Common myeloid progenitor, CD34-positive (primary cell): ENCODE measurements at regions of chr14 and their contacts with region 1.

Region 1: GRCh38 chr14:101843665-101844064 is 82.2 kb downstream of the PPP2R5C start:
- DNase-seq: peak; percentile 88 to 94 (median 91)
- H3K4me3 ChIP-seq: no peak overlapping the region
- H3K27ac ChIP-seq: no peak overlapping the region
- H3K4me1 ChIP-seq: peaks cover 0 to 8% (median 4%) of the 10 kb centered on the region in 4 experiments
- H3K27me3 ChIP-seq: no peaks in the 10 kb centered on the region

Region 2: DNA sequence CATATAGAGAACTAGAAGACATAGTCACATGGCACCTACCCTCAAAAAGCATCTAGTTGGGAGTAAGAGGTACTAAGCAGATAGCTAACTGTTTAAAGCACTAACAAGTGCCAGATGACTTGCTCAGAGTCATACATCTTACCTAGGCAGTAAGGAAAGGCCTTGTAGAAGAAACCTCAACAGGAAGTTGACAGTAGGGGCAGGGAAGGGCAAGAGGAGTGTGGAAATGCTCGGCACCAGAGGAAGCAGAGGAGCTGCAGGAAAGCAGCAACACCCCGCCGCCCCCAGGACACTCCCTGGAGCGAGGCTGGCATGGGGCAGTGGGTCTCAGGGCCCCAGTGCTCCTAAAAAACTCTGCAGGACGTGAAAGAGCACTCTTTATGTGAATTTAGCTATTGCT is 10.7 kb after region 1 on chr14:
- CTCF ChIA-PET with region 1: interaction called, 20 read pairs
- POLR2A ChIA-PET with region 1: interaction called, 3 read pairs
- DNase-seq: peak in 2 of 3 donors; percentile 51 to 67
- H3K4me3 ChIP-seq: peak overlapping the region in 2 of 7 experiments; percentile 25 to 48
- H3K27ac ChIP-seq: peak overlapping the region in 1 of 2 experiments; percentile 45
- H3K4me1 ChIP-seq: peaks cover 9 to 39% (median 35%) of the 10 kb centered on the region in 4 experiments
- H3K27me3 ChIP-seq: no peaks in the 10 kb centered on the region

Region 3: GRCh38 chr14:101865288-101865687 is 21.6 kb after region 1 on chr14:
- CTCF ChIA-PET with region 1: interaction called, 32 read pairs
- POLR2A ChIA-PET with region 1: no interaction called
- DNase-seq: no peak
- H3K4me3 ChIP-seq: no peak overlapping the region
- H3K27ac ChIP-seq: no peak overlapping the region
- H3K4me1 ChIP-seq: peaks cover 0 to 1% (median 0%) of the 10 kb centered on the region in 4 experiments
- H3K27me3 ChIP-seq: no peaks in the 10 kb centered on the region

Region 4: GRCh38 chr14:101889898-101890297 is 46.2 kb after region 1 on chr14:
- CTCF ChIA-PET with region 1: interaction called, 26 read pairs
- POLR2A ChIA-PET with region 1: no interaction called
- DNase-seq: peak; percentile 60 to 77 (median 74)
- H3K4me3 ChIP-seq: no peak overlapping the region
- H3K27ac ChIP-seq: no peak overlapping the region
- H3K4me1 ChIP-seq: no peaks in the 10 kb centered on the region
- H3K27me3 ChIP-seq: no peaks in the 10 kb centered on the region

Region 5: GRCh38 chr14:101908795-101909194 is 65.1 kb after region 1 on chr14:
- CTCF ChIA-PET with region 1: interaction called, 10 read pairs
- POLR2A ChIA-PET with region 1: no interaction called
- DNase-seq: no peak
- H3K4me3 ChIP-seq: no peak overlapping the region
- H3K27ac ChIP-seq: no peak overlapping the region
- H3K4me1 ChIP-seq: no peaks in the 10 kb centered on the region
- H3K27me3 ChIP-seq: no peaks in the 10 kb centered on the region

Region 6: DNA sequence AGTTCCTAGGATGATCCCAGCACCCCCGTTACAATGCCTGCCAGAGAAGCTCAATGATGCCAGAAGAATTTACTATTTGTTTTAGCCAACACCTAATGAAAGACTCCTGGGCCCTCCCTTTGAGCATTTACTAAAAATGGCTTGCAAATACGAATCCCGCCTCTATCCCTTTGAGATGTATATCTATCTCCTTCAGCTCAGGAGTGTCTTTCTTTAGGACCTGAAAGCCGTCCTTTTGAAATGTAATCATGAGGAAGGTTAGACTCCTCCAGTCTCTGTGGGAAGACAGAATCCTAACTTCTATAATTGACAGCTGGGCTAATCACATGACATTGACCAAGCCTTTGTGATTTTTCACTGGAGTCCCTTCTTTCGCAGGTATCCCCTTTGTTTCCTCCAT is 101.5 kb after region 1 on chr14:
- CTCF ChIA-PET with region 1: no interaction called
- POLR2A ChIA-PET with region 1: no interaction called
- DNase-seq: no peak
- H3K4me3 ChIP-seq: no peak overlapping the region
- H3K27ac ChIP-seq: no peak overlapping the region
- H3K4me1 ChIP-seq: peaks cover 0 to 20% (median 18%) of the 10 kb centered on the region in 4 experiments
- H3K27me3 ChIP-seq: peaks cover 0 to 40% (median 5%) of the 10 kb centered on the region in 5 experiments

Region 7: DNA sequence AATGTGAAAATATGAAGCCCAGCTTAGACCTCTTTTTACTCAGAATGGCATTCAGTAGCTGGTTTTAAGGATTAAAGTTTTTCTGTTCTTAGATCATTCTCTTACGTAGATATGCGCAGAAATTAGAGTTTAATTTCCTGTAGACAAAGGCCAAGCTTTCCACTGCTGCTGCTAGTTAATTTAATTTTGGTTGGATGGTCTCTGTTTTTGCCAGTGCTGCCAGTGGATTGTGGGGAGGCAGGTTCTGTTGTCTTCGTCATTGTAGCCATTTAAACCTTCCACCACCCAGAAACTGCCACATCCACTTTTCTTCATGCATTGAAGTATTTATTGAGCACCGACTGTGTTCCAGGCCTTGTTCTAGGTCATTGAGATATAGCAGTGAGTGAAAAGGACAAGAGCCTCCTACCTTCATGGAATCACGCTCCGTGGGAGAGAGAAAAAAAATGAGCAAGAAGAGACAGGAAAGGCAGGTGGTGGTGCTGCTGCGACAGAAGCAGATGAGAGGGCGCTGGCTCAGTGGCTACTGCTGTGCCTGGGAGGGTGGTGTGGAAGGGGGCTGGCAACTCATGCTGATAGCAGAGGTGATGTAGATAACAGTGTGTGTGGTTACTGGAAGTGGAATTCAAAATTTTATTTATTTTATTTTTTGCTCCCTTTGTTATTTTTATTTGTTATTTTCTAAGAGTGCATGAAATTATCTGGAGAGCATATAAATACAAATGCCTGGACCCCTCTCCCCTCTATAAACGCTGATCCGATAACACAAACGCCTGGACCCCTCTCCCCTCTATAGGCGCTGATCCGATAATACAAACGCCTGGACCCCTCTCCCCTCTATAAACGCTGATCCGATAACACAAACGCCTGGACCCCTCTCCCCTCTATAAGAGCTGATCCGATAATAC is 154.0 kb after region 1 on chr14:
- CTCF ChIA-PET with region 1: no interaction called
- POLR2A ChIA-PET with region 1: no interaction called
- DNase-seq: no peak
- H3K4me3 ChIP-seq: no peak overlapping the region
- H3K27ac ChIP-seq: no peak overlapping the region
- H3K4me1 ChIP-seq: no peaks in the 10 kb centered on the region
- H3K27me3 ChIP-seq: no peaks in the 10 kb centered on the region